K562 (cell line): ENCODE measurements at regions of chr14 and their contacts with region 1.

Region 1: GRCh38 chr14:34682787-34683321 is 31.5 kb downstream of the CFL2 start:
- DNase-seq: peak in 1 of 4 experiments; percentile 12
- ATAC-seq: peak; percentile 60
- H3K4me3 ChIP-seq: no peak overlapping the region
- H3K27ac ChIP-seq: no peak overlapping the region; the same call in 2 of the 3 replicates
- H3K4me1 ChIP-seq: peaks cover 0 to 7% of the 10 kb centered on the region in 2 experiments; a peak in 2 of 5 replicates
- H3K27me3 ChIP-seq: no peaks in the 10 kb centered on the region
- CTCF ChIP-seq: no peak
- EP300 ChIP-seq: no peak
- POLR2A ChIP-seq: no peak
- RAD21 ChIP-seq: no peak

Region 2: DNA sequence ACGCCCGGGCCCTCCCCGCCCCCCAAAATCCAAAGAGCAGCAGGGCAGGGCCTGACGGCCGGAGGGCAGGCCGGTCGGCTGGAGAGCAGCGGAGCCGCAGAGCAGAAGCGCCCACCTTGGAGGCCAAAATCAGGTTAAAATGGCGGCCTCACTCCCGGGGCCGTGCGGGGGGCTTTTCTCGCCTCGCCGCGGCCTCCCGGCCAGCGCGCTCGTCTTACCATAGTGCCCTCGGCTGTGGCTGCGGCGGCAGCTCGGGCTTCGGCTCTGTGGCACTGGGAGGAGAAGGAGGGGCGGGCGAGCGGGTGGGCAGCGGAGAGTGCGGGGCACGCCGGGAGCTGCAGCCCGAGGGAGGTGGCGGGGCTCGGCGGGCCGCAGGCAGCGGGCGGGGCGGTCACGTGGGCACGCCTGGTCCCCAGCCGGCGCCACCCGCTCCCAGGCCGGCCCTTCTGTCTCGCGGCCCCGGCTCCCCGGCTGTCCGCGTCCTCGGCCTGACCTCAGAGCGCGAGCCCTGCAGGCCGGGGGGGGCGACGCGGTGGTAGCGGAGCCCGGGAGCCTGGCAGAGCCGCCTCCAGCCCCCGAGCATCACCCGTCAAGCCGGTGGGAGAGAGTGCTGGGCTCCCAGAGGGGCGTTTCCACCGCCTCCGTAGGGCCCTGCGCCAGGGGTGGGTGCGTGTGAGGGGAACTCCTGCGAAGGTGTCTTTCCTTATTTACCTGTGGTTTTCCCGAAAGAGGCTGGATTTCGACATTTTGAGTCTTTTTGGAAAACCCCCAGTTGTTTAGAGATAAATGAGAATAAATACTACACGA is 31.7 kb after region 1 on chr14 and contains the start of gene CFL2:
- CTCF ChIA-PET with region 1: no interaction called
- POLR2A ChIA-PET with region 1: no interaction called
- in situ Hi-C with region 1: loop called (anchors 5 kb)
- intact Hi-C with region 1: no loop called
- DNase-seq: peak; percentile 68 to 88 (median 88)
- ATAC-seq: peak; percentile 98
- H3K4me3 ChIP-seq: peak within 1 kb of the TSS; percentile 89
- H3K27ac ChIP-seq: peak within 1 kb of the TSS; percentile 86
- H3K4me1 ChIP-seq: peaks cover 5 to 19% of the 10 kb centered on the region in 2 experiments; a peak in 4 of 5 replicates
- H3K27me3 ChIP-seq: no peaks in the 10 kb centered on the region
- CTCF ChIP-seq: no peak
- EP300 ChIP-seq: no peak
- POLR2A ChIP-seq: peak; percentile 68
- RAD21 ChIP-seq: no peak
- polyA plus RNA-seq, gene CFL2: 5.8 to 5.9 TPM

Region 3: DNA sequence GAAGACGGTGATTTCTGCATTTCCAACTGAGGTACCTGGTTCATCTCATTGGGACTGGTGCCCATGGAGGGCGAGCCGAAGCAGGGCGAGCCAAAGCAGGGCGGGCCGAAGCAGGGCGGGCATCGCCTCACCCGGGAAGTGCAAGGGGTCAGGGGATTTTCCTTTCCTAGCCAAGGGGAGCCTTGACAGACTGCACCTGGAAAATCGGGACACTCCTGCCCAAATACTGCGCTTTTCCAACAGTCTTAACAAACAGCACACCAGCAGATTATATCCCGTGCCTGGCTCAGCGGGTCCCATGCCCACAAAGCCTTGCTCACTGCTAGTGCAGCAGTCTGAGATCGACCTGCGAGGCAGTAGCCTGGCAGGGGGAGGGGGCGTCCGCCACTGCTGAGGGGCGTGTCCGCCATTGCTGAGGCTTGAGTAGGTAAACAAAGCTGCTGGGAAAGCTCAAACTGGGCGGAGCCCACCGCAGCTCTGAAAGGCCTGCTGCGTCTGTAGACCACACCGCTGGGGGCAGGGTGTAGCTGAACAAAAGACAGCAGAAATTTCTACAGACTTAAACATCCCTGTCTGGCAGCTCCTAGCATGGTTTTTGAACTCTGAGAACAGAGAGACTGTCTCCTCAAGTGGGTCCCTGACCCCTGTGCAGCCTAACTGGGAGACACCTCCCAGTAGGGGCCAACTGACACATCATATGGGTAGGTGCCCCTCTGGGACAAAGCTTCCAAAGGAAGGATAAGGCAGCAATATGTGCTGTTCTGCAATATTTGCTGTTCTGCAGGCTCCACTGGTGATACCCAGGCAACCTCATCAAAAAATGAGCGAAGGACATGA is 115.1 kb after region 1 on chr14:
- CTCF ChIA-PET with region 1: no interaction called
- POLR2A ChIA-PET with region 1: no interaction called
- in situ Hi-C with region 1: no loop called
- intact Hi-C with region 1: no loop called
- DNase-seq: peak in 3 of 4 experiments; percentile 5 to 45 (median 8)
- ATAC-seq: peak; percentile 84
- H3K4me3 ChIP-seq: no peak overlapping the region
- H3K27ac ChIP-seq: no peak overlapping the region
- H3K4me1 ChIP-seq: peaks cover 0 to 6% of the 10 kb centered on the region in 2 experiments; a peak in 2 of 5 replicates
- H3K27me3 ChIP-seq: no peaks in the 10 kb centered on the region
- CTCF ChIP-seq: no peak
- EP300 ChIP-seq: no peak
- POLR2A ChIP-seq: no peak
- RAD21 ChIP-seq: no peak